BJ (cell line): ENCODE measurements at regions of chr9 and their contacts with region 1.

Region 1: GRCh38 chr9:18877984-18878383 is 155.0 kb downstream of the SAXO1 start:
- DNase-seq: no peak
- H3K4me3 ChIP-seq: no peak overlapping the region
- H3K27me3 ChIP-seq: no peaks in the 10 kb centered on the region
- CTCF ChIP-seq: no peak

Region 2: GRCh38 chr9:18810581-18810980 is 67.4 kb before region 1 on chr9:
- CTCF ChIA-PET with region 1: no interaction called
- POLR2A ChIA-PET with region 1: interaction called, 11 read pairs
- DNase-seq: no peak
- H3K4me3 ChIP-seq: no peak overlapping the region
- H3K27me3 ChIP-seq: no peaks in the 10 kb centered on the region
- CTCF ChIP-seq: no peak